MCF 10A (cell line): ENCODE measurements at regions of chr6 and their contacts with region 1.

Region 1: GRCh38 chr6:123415844-123416468 is 220.8 kb downstream of the TRDN start:
- DNase-seq: peak; percentile 58
- H3K4me3 Mint-ChIP-seq: no peak overlapping the region
- H3K27ac Mint-ChIP-seq: no peak overlapping the region
- H3K4me1 Mint-ChIP-seq: no peaks in the 10 kb centered on the region
- H3K27me3 Mint-ChIP-seq: peaks cover 76% of the 10 kb centered on the region
- CTCF ChIP-seq: peak; percentile 55

Region 2: GRCh38 chr6:123118593-123119228 is 297.2 kb before region 1 on chr6:
- CTCF ChIA-PET with region 1: no interaction called
- POLR2A ChIA-PET with region 1: no interaction called
- intact Hi-C with region 1: no loop called
- DNase-seq: peak; percentile 17
- H3K4me3 Mint-ChIP-seq: no peak overlapping the region
- H3K27ac Mint-ChIP-seq: no peak overlapping the region
- H3K4me1 Mint-ChIP-seq: no peaks in the 10 kb centered on the region
- H3K27me3 Mint-ChIP-seq: no peaks in the 10 kb centered on the region
- CTCF ChIP-seq: no peak

Region 3: GRCh38 chr6:123295181-123295580 is 120.8 kb before region 1 on chr6:
- CTCF ChIA-PET with region 1: no interaction called
- POLR2A ChIA-PET with region 1: no interaction called
- intact Hi-C with region 1: no loop called
- DNase-seq: no peak
- H3K4me3 Mint-ChIP-seq: no peak overlapping the region
- H3K27ac Mint-ChIP-seq: no peak overlapping the region
- H3K4me1 Mint-ChIP-seq: no peaks in the 10 kb centered on the region
- H3K27me3 Mint-ChIP-seq: no peaks in the 10 kb centered on the region
- CTCF ChIP-seq: no peak

Region 4: DNA sequence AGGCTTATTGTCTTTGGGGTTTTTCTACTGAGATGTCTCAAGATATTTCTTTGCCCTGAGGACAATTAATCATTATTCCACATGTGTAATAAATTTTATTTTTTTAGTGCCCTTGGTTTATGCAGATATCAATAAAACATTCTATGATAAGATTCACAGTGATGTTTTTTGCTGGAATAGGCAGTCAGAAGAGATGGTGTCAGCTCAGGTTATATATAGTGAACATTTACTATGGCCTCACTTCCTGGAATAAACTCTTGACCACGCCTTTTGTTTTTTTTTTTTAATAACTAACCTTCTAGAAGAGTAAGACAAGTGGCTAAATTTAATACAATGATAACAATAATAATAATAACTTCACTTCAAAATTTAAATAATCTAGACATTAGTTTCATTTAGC is 11.1 kb after region 1 on chr6:
- CTCF ChIA-PET with region 1: interaction called, 13 read pairs
- POLR2A ChIA-PET with region 1: interaction called, 3 read pairs
- intact Hi-C with region 1: no loop called
- DNase-seq: no peak
- H3K4me3 Mint-ChIP-seq: no peak overlapping the region
- H3K27ac Mint-ChIP-seq: no peak overlapping the region
- H3K4me1 Mint-ChIP-seq: no peaks in the 10 kb centered on the region
- H3K27me3 Mint-ChIP-seq: peaks cover 26% of the 10 kb centered on the region
- CTCF ChIP-seq: no peak

Region 5: GRCh38 chr6:123715006-123715875 is 299.3 kb after region 1 on chr6:
- CTCF ChIA-PET with region 1: interaction called, 61 read pairs
- POLR2A ChIA-PET with region 1: no interaction called
- intact Hi-C with region 1: loop called (anchors 1 kb)
- DNase-seq: peak; percentile 51
- H3K4me3 Mint-ChIP-seq: no peak overlapping the region
- H3K27ac Mint-ChIP-seq: no peak overlapping the region
- H3K4me1 Mint-ChIP-seq: no peaks in the 10 kb centered on the region
- H3K27me3 Mint-ChIP-seq: peaks cover 47% of the 10 kb centered on the region
- CTCF ChIP-seq: peak; percentile 61

Region 6: DNA sequence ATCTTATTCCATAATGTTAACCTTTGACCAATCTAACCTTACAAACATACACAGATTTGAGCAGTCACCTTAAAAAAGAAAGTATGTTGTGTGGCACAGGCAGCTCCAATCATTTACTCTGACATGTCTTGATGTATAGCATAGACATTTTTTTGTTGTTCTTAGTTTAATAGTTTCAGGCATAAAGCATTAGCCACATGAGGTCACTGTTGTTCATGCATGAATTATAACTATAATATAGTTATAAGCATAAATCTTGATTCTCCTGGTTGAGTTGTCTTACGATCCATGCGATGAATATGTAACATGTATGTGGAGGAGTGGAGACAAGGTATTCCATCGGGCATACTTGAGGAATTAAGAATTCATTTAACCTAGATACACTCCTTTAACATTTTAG is 361.6 kb after region 1 on chr6:
- CTCF ChIA-PET with region 1: interaction called, 3 read pairs
- POLR2A ChIA-PET with region 1: no interaction called
- intact Hi-C with region 1: loop called (anchors 5 kb)
- DNase-seq: peak; percentile 54
- H3K4me3 Mint-ChIP-seq: no peak overlapping the region
- H3K27ac Mint-ChIP-seq: no peak overlapping the region
- H3K4me1 Mint-ChIP-seq: no peaks in the 10 kb centered on the region
- H3K27me3 Mint-ChIP-seq: peaks cover 9% of the 10 kb centered on the region
- CTCF ChIP-seq: peak; percentile 55

Region 7: GRCh38 chr6:124795643-124796463 is 1379.9 kb after region 1 on chr6:
- CTCF ChIA-PET with region 1: interaction called, 6 read pairs
- POLR2A ChIA-PET with region 1: no interaction called
- intact Hi-C with region 1: loop called (anchors 2 kb)
- DNase-seq: peak; percentile 52
- H3K4me3 Mint-ChIP-seq: no peak overlapping the region
- H3K27ac Mint-ChIP-seq: no peak overlapping the region
- H3K4me1 Mint-ChIP-seq: peaks cover 16% of the 10 kb centered on the region
- H3K27me3 Mint-ChIP-seq: no peaks in the 10 kb centered on the region
- CTCF ChIP-seq: peak; percentile 85

Region 8: GRCh38 chr6:124854338-124854922 is 1438.5 kb after region 1 on chr6:
- CTCF ChIA-PET with region 1: interaction called, 8 read pairs
- POLR2A ChIA-PET with region 1: no interaction called
- intact Hi-C with region 1: loop called (anchors 1 kb)
- DNase-seq: peak; percentile 11
- H3K4me3 Mint-ChIP-seq: no peak overlapping the region
- H3K27ac Mint-ChIP-seq: no peak overlapping the region
- H3K4me1 Mint-ChIP-seq: no peaks in the 10 kb centered on the region
- H3K27me3 Mint-ChIP-seq: no peaks in the 10 kb centered on the region
- CTCF ChIP-seq: peak; percentile 38